ENCODE measurements at regions of chr4 and their contacts with region 1.

Region 1: DNA sequence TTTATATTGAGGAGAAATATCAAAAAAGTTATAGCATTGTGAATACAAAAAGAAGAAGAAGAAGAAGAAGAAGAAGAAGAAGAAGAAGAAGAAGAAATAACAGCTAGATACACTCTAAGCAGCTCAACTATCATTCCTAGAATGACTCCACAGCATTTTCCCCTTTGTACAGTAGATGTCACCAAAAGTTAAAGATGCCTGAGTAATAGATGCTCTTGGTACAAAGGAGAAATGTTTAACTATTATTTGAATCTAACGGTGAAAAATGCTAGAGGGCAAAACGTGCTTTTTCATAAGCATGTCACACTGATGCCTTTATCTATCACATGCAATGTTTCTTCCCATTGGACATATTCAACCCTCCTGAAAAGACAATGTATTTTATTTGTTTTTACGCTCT is 178.4 kb upstream of the GPRIN3 start:
- DNase-seq: no peak
- H3K4me3 ChIP-seq: no peak overlapping the region
- H3K27me3 ChIP-seq: no peaks in the 10 kb centered on the region
- CTCF ChIP-seq: peak; percentile 59

Region 2: DNA sequence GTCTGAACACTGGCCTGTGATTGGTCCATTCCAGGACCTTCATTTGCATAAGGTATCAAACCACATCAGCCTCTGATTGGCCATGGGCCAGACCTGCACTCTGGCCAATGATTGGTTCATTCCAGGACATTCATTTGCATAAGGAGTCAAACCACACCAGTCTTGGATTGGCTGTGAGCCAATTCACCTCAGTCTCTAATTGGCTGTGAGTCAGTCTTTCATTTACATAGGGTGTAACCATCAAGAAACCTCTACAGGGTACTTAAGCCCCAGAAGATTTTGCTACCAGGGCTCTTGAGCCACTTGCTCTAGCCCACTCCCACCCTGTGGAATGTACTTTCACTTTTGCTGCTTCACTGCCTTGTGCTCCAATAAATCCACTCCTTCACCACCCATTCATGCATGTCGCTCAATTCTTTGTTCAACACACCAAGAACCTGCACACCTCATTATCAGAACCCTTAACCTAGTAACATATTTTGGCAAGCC is 1043.3 kb before region 1 on chr4:
- CTCF ChIA-PET with region 1: no interaction called
- POLR2A ChIA-PET with region 1: no interaction called
- DNase-seq: no peak
- H3K4me3 ChIP-seq: no peak overlapping the region
- H3K27me3 ChIP-seq: no peaks in the 10 kb centered on the region
- CTCF ChIP-seq: no peak

Region 3: GRCh38 chr4:89502581-89502980 is 16.5 kb after region 1 on chr4:
- CTCF ChIA-PET with region 1: no interaction called
- POLR2A ChIA-PET with region 1: no interaction called
- DNase-seq: no peak
- H3K4me3 ChIP-seq: no peak overlapping the region
- H3K27me3 ChIP-seq: no peaks in the 10 kb centered on the region
- CTCF ChIP-seq: no peak

Region 4: GRCh38 chr4:89868999-89869589 is 383.1 kb after region 1 on chr4:
- CTCF ChIA-PET with region 1: interaction called, 21 read pairs
- POLR2A ChIA-PET with region 1: no interaction called
- DNase-seq: no peak
- H3K4me3 ChIP-seq: no peak overlapping the region
- H3K27me3 ChIP-seq: no peaks in the 10 kb centered on the region
- CTCF ChIP-seq: peak; percentile 42